Heart right ventricle (tissue), 16 donors: ENCODE measurements at regions of chr5 and their contacts with region 1.

Region 1: DNA sequence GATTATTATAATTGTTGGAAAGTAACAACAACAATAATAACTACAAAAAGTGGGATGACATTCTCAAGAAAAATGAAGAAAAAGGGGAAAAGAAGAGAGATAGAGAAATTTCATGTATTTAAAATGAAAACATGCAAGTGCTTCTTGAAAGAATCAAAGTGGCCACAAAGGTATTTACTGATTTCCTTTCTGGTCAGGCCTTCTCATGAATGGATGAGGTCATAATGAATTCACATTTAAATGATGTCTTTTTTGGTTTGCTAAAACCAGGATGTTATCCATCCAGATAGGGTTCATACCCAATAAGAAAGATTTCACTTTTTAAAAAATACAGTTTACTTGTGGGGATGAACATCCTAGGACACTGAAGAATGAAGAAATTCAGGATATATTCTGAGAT is 446.4 kb upstream of the PTGER4 start:
- DNase-seq: no peak
- ATAC-seq: no peak
- H3K4me3 ChIP-seq: no peak overlapping the region
- H3K27ac ChIP-seq: no peak overlapping the region
- H3K4me1 ChIP-seq: no peaks in the 10 kb centered on the region
- H3K27me3 ChIP-seq: no peaks in the 10 kb centered on the region
- CTCF ChIP-seq: no peak

Region 2: GRCh38 chr5:40266952-40267351 is 33.7 kb after region 1 on chr5:
- intact Hi-C with region 1: no loop called
- DNase-seq: no peak
- ATAC-seq: no peak
- H3K4me3 ChIP-seq: no peak overlapping the region
- H3K27ac ChIP-seq: no peak overlapping the region
- H3K4me1 ChIP-seq: peaks cover 0 to 20% (median 0%) of the 10 kb centered on the region in 9 donors
- H3K27me3 ChIP-seq: no peaks in the 10 kb centered on the region
- CTCF ChIP-seq: no peak

Region 3: DNA sequence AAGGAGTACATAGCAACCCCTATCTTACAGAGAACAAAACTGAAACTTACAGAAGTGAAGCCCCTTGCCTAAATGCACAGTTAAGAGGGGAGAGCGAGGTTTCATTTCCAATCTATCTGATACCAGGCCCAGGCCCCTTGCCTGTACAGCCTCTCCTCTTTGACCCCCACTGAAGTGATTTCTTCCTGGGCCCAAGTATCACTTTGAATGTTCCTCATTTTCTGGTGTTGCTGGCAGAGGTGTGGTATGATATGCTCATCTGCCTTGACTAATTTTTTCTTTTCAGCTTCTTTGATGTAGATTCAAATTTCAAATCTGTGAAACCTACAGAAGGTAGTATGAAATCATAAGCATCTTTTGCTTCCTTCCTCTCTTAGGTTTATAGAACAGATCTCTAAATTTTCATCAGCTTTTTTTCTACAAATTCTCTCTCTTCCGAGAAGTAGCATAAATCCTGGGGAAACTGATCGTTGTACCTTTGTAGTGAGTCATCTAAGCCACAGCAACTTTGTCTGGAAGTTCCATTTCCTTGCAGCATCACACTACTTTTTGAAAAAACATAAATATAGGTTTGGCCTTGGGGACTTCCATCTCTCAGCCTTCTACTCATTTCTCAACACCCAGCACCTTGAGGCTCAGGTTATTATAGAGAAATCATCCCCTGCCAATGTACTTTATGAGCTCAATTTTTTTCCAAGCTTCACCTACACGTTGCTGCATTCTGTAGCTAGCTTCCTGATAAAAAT is 44.1 kb after region 1 on chr5:
- intact Hi-C with region 1: no loop called
- DNase-seq: no peak
- ATAC-seq: no peak
- H3K4me3 ChIP-seq: no peak overlapping the region
- H3K27ac ChIP-seq: no peak overlapping the region
- H3K4me1 ChIP-seq: no peaks in the 10 kb centered on the region
- H3K27me3 ChIP-seq: no peaks in the 10 kb centered on the region
- CTCF ChIP-seq: no peak

Region 4: GRCh38 chr5:40521925-40522324 is 288.7 kb after region 1 on chr5:
- intact Hi-C with region 1: loop called in 1 of 10 experiments (anchors 5 kb)
- DNase-seq: no peak
- ATAC-seq: peak in 1 of 8 donors; percentile 33
- H3K4me3 ChIP-seq: no peak overlapping the region
- H3K27ac ChIP-seq: no peak overlapping the region
- H3K4me1 ChIP-seq: peaks cover 0 to 10% (median 0%) of the 10 kb centered on the region in 9 donors
- H3K27me3 ChIP-seq: no peaks in the 10 kb centered on the region
- CTCF ChIP-seq: no peak